ENCODE measurements at regions of chr2 and their contacts with region 1.

Region 1: GRCh38 chr2:74529357-74530238 is at the starts of genes AUP1 and HTRA2:
- DNase-seq: peak; percentile 75 to 92 (median 83)
- ATAC-seq: peak; percentile 90
- H3K4me3 ChIP-seq: peak within 1 kb of the TSS; percentile 94
- H3K4me3 Mint-ChIP-seq: peak within 1 kb of the TSS; percentile 91 to 98 (median 94)
- H3K27ac ChIP-seq: peak within 1 kb of the TSS; percentile 85
- H3K27ac Mint-ChIP-seq: peak within 1 kb of the TSS; percentile 88 to 97 (median 93)
- H3K4me1 ChIP-seq: peaks cover 11 to 25% of the 10 kb centered on the region in 2 donors
- H3K4me1 Mint-ChIP-seq: peaks cover 25 to 50% (median 43%) of the 10 kb centered on the region in 7 donors
- H3K27me3 ChIP-seq: no peaks in the 10 kb centered on the region
- H3K27me3 Mint-ChIP-seq: no peaks in the 10 kb centered on the region
- total RNA-seq, gene AUP1: 121 to 160 (median 144) TPM
- total RNA-seq, gene HTRA2: 16.9 to 46.2 (median 37.7) TPM

Region 2: DNA sequence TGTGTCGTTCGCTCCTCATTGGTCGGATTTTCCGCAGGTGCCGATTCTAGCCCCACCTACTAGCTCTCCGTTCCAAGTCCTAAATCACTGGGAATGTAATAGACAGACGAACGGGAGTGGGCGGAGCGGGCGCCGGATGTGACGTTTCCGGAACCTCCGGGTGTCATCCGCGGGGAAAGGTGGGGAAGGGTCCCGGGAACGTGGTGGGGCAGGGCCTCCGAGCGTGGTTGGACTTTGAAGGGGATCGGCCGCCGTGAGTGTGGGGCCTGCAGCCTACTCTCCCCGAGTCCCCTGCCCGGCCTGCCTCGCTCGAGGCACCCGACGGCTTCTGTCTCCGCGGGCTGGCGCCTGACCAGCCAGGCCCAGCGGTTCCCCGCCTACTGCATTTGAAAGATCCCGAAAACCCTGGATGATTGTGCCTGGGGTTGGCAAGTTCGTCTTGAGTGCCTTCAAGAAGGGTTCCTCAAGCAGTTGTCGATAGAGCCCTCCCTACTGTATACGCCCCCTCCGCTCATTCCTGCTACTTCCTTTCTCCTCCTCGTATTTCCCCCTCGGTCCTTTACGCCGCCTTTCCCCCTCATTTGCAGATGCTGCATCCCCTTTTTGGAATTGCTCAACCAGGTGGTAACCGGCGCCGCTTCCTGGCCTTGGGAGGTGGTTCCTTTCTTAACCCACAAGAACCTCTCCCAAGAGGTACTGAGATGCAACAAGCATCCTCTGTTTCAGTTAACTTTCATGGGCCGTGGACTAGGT is 700.6 kb before region 1 on chr2 and contains the start of gene STAMBP:
- CTCF ChIA-PET with region 1: interaction called, 3 read pairs
- POLR2A ChIA-PET with region 1: interaction called, 4 read pairs
- intact Hi-C with region 1: loop called in 1 of 2 experiments (anchors 10 kb)
- DNase-seq: peak; percentile 67 to 95 (median 86)
- ATAC-seq: peak; percentile 96
- H3K4me3 ChIP-seq: peak within 1 kb of the TSS; percentile 81
- H3K4me3 Mint-ChIP-seq: peak within 1 kb of the TSS; percentile 93 to 99 (median 97)
- H3K27ac ChIP-seq: peak within 1 kb of the TSS; percentile 97
- H3K27ac Mint-ChIP-seq: peak within 1 kb of the TSS; percentile 88 to 99 (median 95)
- H3K4me1 ChIP-seq: peaks cover 22 to 25% of the 10 kb centered on the region in 2 donors
- H3K4me1 Mint-ChIP-seq: peaks cover 24 to 58% (median 52%) of the 10 kb centered on the region in 7 donors
- H3K27me3 ChIP-seq: no peaks in the 10 kb centered on the region
- H3K27me3 Mint-ChIP-seq: peaks cover 0 to 3% (median 0%) of the 10 kb centered on the region in 5 donors
- total RNA-seq, gene STAMBP: 22.2 to 44.5 (median 32.9) TPM

Region 3: DNA sequence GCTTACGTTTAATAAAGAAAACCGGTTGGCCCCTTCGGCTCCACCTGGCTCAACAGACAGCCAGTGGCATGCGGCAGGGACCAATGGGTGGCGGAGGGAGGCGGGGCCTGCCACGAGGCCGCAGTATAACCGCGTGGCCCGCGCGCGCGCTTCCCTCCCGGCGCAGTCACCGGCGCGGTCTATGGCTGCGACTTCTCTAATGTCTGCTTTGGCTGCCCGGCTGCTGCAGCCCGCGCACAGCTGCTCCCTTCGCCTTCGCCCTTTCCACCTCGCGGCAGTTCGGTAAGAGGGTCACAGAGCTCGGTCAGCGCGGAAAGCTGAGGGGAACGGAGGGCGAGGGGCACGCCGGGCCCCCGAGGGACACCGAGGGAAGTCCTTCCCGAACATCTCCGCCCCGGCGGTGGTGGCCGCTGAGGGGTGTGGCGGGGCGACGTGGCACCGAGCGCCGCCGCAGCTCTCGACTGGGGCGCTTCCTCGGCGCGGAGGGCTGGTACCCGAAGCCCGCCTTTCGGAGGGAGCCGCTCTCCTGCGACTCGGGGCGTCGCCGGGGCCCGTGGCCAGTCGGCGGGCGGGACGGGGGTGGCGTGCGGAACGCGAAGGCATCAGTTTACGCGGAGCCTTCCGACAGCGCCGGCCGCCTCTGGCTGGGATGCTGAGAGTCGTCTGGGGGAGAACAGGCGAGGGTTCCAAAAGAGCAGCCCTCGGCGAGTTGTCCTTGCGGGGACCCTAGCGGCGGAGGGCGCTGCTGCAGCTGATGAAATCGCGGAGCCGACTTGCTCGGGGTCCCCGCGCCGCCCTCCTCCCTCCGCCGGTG is 330.9 kb before region 1 on chr2 and contains the start of gene MTHFD2:
- CTCF ChIA-PET with region 1: no interaction called
- POLR2A ChIA-PET with region 1: no interaction called
- intact Hi-C with region 1: loop called in 1 of 2 experiments (anchors 5 kb)
- DNase-seq: peak; percentile 76 to 93 (median 82)
- ATAC-seq: peak; percentile 94
- H3K4me3 ChIP-seq: peak within 1 kb of the TSS; percentile 65
- H3K4me3 Mint-ChIP-seq: peak within 1 kb of the TSS; percentile 90 to 100 (median 96)
- H3K27ac ChIP-seq: peak within 1 kb of the TSS; percentile 88
- H3K27ac Mint-ChIP-seq: peak within 1 kb of the TSS; percentile 94 to 100 (median 97)
- H3K4me1 ChIP-seq: peaks cover 13 to 16% of the 10 kb centered on the region in 2 donors
- H3K4me1 Mint-ChIP-seq: peaks cover 29 to 50% (median 35%) of the 10 kb centered on the region in 7 donors
- H3K27me3 ChIP-seq: no peaks in the 10 kb centered on the region
- H3K27me3 Mint-ChIP-seq: no peaks in the 10 kb centered on the region
- total RNA-seq, gene MTHFD2: 14.5 to 186 (median 25.1) TPM

Region 4: DNA sequence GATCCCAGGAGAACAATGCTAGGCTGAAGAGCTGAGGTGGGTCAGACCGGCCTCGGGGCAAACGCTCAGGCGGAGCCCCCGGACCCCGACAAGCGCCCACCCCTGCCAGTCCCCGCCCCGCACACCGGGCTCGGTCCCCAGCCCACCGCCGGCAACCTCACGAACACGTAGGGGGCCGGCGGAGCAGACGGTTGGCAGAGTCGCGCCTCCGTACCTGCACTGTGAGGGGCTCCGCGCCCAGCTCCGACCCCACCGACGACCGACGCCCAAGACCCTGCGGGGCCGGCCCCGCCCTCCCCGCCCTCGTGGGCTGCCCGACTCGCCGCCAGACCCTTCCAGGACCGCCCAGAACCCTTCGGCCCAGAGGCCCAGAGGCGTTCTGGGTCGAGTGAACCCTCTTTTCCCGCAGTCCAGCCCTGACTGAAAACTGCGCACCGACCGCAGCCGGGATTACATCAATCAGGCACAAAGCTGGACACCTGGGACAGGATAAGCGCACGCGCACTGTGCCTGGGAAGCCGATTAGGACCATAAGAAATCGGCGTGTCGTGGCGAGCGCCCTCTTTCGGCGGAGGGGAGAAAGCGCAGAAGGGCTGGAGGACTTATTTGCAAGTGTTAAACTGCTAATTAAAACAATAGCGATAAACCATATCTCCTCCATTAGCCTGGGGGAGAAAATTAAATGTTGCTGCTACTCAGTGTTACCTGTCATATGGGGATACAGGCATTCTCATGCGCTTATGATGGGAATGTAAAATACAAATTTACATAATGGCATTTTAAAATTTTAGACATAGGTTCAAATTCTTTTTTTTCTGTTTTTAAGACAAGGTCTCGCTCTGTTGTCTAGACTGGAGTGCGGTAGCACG is 137.8 kb before region 1 on chr2:
- CTCF ChIA-PET with region 1: interaction called, 5 read pairs
- POLR2A ChIA-PET with region 1: no interaction called
- intact Hi-C with region 1: loop called (anchors 1 kb)
- DNase-seq: peak; percentile 89 to 99 (median 93)
- ATAC-seq: peak; percentile 97
- H3K4me3 ChIP-seq: peak overlapping the region; percentile 78
- H3K4me3 Mint-ChIP-seq: peak overlapping the region in 4 of 10 donors; percentile 40 to 100 (median 92)
- H3K27ac ChIP-seq: peak overlapping the region; percentile 91
- H3K27ac Mint-ChIP-seq: peak overlapping the region in 8 of 9 donors; percentile 98 to 100 (median 99)
- H3K4me1 ChIP-seq: peaks cover 8 to 25% of the 10 kb centered on the region in 2 donors
- H3K4me1 Mint-ChIP-seq: peaks cover 0 to 15% (median 5%) of the 10 kb centered on the region in 7 donors
- H3K27me3 ChIP-seq: no peaks in the 10 kb centered on the region
- H3K27me3 Mint-ChIP-seq: peaks cover 0 to 14% (median 5%) of the 10 kb centered on the region in 5 donors

Region 5: GRCh38 chr2:74482801-74483674 is 46.6 kb before region 1 on chr2 and contains the starts of genes CCDC142 and TTC31:
- CTCF ChIA-PET with region 1: interaction called, 19 read pairs
- POLR2A ChIA-PET with region 1: interaction called, 28 read pairs
- intact Hi-C with region 1: loop called (anchors 1 kb)
- DNase-seq: peak; percentile 76 to 96 (median 96)
- ATAC-seq: peak; percentile 96
- H3K4me3 ChIP-seq: peak within 1 kb of the TSS; percentile 99
- H3K4me3 Mint-ChIP-seq: peak within 1 kb of the TSS; percentile 91 to 100 (median 98)
- H3K27ac ChIP-seq: peak within 1 kb of the TSS; percentile 85
- H3K27ac Mint-ChIP-seq: peak within 1 kb of the TSS; percentile 93 to 100 (median 99)
- H3K4me1 ChIP-seq: peaks cover 22 to 26% of the 10 kb centered on the region in 2 donors
- H3K4me1 Mint-ChIP-seq: peaks cover 21 to 59% (median 41%) of the 10 kb centered on the region in 7 donors
- H3K27me3 ChIP-seq: no peaks in the 10 kb centered on the region
- H3K27me3 Mint-ChIP-seq: no peaks in the 10 kb centered on the region
- total RNA-seq, gene CCDC142: 21.4 to 75.2 (median 33.8) TPM
- total RNA-seq, gene TTC31: 35.5 to 50.4 (median 43.6) TPM

Region 6: DNA sequence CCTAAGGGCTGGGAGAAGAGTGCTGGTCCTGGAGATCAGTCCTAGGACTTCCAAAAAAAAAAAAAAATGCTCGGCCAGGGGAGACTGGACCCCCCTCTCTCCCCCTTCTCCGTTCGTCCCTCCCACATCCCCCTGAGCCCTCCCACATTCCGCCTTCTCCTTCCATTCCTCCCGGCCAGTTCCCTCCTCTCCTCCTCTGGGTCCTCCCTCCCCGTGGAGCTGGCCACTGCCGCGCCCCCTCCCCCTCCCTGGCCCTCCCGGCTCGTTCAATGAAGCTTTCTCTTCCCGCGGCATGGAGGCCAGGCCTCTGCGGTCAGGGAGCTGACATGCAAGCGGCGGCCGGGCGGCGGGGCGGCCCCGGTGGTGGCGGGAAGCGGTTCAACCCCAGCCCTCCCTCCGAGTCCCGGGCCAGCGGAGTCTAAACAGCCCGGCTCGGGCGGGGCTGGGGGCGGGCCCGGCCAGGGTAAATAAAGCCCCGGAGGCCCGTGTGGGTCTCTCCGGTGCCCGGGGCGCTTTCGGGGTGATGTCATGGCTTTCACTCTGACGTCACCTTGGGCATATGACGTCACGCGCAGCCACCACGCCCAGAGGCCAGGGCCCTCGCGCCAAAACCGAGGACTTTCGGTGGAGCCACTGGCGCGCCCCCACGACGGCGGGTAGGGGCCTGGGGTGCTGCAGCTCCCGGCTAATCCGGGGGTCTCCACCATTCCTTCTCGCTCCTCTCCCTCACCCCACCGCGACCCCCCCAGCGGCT is 24.5 kb after region 1 on chr2 and contains the start of gene LOXL3:
- CTCF ChIA-PET with region 1: interaction called, 3 read pairs
- POLR2A ChIA-PET with region 1: interaction called, 5 read pairs
- intact Hi-C with region 1: loop called (anchors 1 kb)
- DNase-seq: peak in 8 of 9 donors; percentile 63 to 87 (median 76)
- ATAC-seq: peak; percentile 67
- H3K4me3 ChIP-seq: peak within 1 kb of the TSS; percentile 70
- H3K4me3 Mint-ChIP-seq: peak within 1 kb of the TSS; percentile 85 to 96 (median 92)
- H3K27ac ChIP-seq: peak within 1 kb of the TSS; percentile 76
- H3K27ac Mint-ChIP-seq: peak within 1 kb of the TSS; percentile 62 to 95 (median 86)
- H3K4me1 ChIP-seq: peaks cover 7 to 17% of the 10 kb centered on the region in 2 donors
- H3K4me1 Mint-ChIP-seq: peaks cover 9 to 31% (median 18%) of the 10 kb centered on the region in 7 donors
- H3K27me3 ChIP-seq: peaks cover 0 to 10% of the 10 kb centered on the region in 2 donors
- H3K27me3 Mint-ChIP-seq: peaks cover 21 to 27% (median 24%) of the 10 kb centered on the region in 5 donors
- total RNA-seq, gene LOXL3: 0.50 to 6.9 (median 0.81) TPM

Measured in naive thymus-derived CD4-positive, alpha-beta T cell (primary cell).